IMR-90 (cell line): ENCODE measurements at regions of chr14 and their contacts with region 1.

Region 1: DNA sequence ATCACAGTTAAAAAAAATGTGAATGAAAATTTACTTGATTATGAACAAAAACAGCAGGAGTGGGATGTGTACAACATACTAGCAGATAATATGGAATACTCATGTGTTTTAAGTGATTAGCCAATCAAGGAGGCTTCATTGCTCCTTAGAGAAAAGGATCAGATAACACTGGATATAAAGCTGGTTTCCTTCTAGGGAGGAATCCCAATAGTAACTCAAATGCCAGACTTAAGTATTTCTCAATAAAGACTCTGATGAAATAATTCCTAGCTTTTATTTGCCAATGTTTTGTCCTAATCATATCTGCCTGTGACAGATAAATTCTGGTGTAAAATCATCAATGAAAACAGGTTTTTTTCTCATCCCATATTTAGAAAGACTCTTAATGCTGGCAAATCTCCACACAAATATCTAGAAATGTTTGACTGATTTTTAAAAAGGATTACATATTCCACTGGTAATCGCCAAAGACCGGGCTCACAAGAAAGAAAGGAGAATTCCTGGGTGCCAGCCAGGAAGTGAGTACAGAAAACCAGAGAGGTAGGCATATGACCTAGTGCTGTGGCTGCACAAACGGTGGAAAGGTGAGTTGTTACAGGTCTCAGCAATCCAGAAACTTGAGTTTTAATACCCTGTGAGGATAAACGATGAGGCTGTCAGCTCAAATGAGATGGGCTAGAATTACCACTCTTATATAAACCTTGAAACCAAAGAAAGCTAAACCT is 108.6 kb upstream of the TTC7B start:
- DNase-seq: peak; percentile 2
- ATAC-seq: 0 out of 2 replicates have a peak, but pooled peaks have one; percentile 44
- H3K4me3 ChIP-seq: no peak overlapping the region
- H3K27ac ChIP-seq: peak overlapping the region; percentile 50; the same call in 1 of the 2 replicates
- H3K4me1 ChIP-seq: no peaks in the 10 kb centered on the region; the same call in 1 of the 2 replicates
- H3K27me3 ChIP-seq: no peaks in the 10 kb centered on the region
- CTCF ChIP-seq: no peak
- POLR2A ChIP-seq: no peak
- RAD21 ChIP-seq: no peak

Region 2: DNA sequence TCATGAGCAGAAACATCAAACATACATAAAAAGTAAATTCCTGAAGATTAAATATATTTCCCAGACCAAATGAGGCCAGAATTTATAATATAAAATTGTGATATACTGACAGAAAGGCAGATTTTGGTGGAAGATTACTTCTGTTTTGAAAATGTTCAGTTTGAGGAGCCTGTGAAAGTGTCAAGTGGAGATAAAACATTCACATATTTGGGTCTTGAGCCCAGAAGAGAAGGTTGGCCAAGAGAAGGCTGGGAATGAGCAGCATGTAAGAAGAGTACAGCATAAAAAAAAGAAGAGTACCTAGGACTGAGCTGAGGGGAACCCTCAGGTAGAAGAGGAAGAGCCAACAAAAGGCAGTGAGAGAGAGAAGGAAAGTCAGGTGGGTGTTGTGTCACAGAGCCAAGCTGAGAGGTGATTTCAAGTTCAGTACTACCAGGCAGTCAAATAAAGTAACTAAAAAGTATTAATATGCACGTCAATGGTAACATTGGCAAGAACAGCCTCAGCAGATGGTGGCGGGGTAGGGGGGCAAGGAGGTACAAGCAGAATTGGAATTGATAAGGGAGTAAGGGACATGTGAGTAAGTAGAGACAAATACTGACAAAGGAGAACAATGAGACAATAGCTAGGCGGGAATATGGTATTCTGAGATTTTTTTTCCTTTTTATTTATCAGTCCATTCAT is 12.1 kb after region 1 on chr14:
- CTCF ChIA-PET with region 1: interaction called, 3 read pairs
- POLR2A ChIA-PET with region 1: no interaction called
- dilution Hi-C with region 1: no loop called
- in situ Hi-C with region 1: no loop called
- intact Hi-C with region 1: loop called (anchors 1 kb)
- DNase-seq: no peak
- ATAC-seq: no peak
- H3K4me3 ChIP-seq: no peak overlapping the region
- H3K27ac ChIP-seq: no peak overlapping the region
- H3K4me1 ChIP-seq: no peaks in the 10 kb centered on the region
- H3K27me3 ChIP-seq: no peaks in the 10 kb centered on the region
- CTCF ChIP-seq: no peak
- POLR2A ChIP-seq: no peak
- RAD21 ChIP-seq: no peak